ENCODE measurements at regions of chr5 and their contacts with region 1.

Region 1: DNA sequence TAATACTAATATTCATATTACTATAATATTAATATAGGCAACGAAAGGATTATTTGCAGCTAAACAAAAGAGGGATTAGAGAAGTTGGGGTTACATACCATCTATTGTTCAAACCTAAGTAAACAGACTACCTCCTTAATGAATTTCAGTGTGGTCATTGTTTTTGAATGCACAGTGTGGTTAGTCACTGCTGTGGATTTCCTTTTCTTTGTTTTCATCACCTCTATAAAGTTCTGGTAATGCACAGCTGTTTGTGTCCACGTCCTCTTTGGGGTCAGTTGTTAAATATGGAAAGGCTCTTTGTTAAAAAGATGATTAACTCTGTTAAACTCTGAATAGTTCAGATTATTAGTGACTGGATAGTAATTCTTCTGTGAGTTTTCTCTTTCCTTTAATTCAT is 233.6 kb downstream of the MAST4 start:
- DNase-seq: peak in 2 of 3 donors; percentile 19 to 31
- H3K4me3 ChIP-seq: no peak overlapping the region
- H3K4me3 Mint-ChIP-seq: peak overlapping the region in 1 of 2 donors; percentile 22
- H3K27ac ChIP-seq: no peak overlapping the region
- H3K27ac Mint-ChIP-seq: no peak overlapping the region
- H3K4me1 ChIP-seq: peaks cover 12 to 16% of the 10 kb centered on the region in 2 donors
- H3K4me1 Mint-ChIP-seq: peaks cover 20% of the 10 kb centered on the region
- H3K27me3 ChIP-seq: peaks cover 4 to 27% of the 10 kb centered on the region in 2 donors
- H3K27me3 Mint-ChIP-seq: peaks cover 24 to 34% (median 25%) of the 10 kb centered on the region in 3 donors
- CTCF ChIP-seq: no peak

Region 2: GRCh38 chr5:65209341-65209740 is 1620.5 kb before region 1 on chr5:
- intact Hi-C with region 1: no loop called
- DNase-seq: no peak
- H3K4me3 ChIP-seq: no peak overlapping the region
- H3K4me3 Mint-ChIP-seq: no peak overlapping the region
- H3K27ac ChIP-seq: no peak overlapping the region
- H3K27ac Mint-ChIP-seq: no peak overlapping the region
- H3K4me1 ChIP-seq: no peaks in the 10 kb centered on the region
- H3K4me1 Mint-ChIP-seq: no peaks in the 10 kb centered on the region
- H3K27me3 ChIP-seq: no peaks in the 10 kb centered on the region
- H3K27me3 Mint-ChIP-seq: peaks cover 0 to 4% (median 0%) of the 10 kb centered on the region in 3 donors
- CTCF ChIP-seq: no peak

Region 3: DNA sequence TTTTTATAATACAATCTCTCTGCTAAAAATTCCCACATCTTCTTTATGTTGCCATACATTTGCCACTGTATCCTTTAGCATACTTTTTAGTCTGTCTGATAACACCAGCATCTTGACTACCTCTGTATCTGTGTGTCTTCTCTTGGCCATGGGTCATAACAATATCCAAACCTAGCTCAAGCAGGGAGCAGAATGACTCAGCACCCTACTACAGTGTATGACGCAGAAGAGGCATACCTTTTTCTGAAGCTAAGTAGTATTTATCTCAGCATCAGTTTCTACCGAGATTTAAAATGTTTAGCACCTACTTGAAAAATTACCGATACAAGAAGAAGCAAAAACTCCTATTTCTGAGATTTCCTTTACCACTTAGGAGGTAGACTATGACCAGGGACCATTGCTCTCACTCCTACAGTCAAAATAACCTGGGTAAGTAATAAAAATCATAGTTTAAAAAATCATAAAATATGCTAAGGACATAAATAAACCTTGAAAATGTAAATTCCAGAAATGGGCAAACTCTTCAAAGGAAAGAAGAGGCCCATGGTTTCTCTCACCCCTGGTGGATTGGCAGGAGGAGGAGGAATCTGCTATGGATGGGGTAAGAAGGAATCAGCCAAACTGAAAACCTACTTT is 52.9 kb after region 1 on chr5:
- intact Hi-C with region 1: loop called in 1 of 2 experiments (anchors 10 kb)
- DNase-seq: no peak
- H3K4me3 ChIP-seq: no peak overlapping the region
- H3K4me3 Mint-ChIP-seq: no peak overlapping the region
- H3K27ac ChIP-seq: no peak overlapping the region
- H3K27ac Mint-ChIP-seq: no peak overlapping the region
- H3K4me1 ChIP-seq: no peaks in the 10 kb centered on the region
- H3K4me1 Mint-ChIP-seq: peaks cover 9% of the 10 kb centered on the region
- H3K27me3 ChIP-seq: no peaks in the 10 kb centered on the region
- H3K27me3 Mint-ChIP-seq: peaks cover 0 to 7% (median 3%) of the 10 kb centered on the region in 3 donors
- CTCF ChIP-seq: no peak

Measured in CD14-positive monocyte (primary cell).